BJ (cell line): ENCODE measurements at regions of chr21 and their contacts with region 1.

Region 1: GRCh38 chr21:25970254-25970930 is 200.2 kb downstream of the APP start:
- DNase-seq: no peak
- H3K4me3 ChIP-seq: no peak overlapping the region
- H3K27me3 ChIP-seq: no peaks in the 10 kb centered on the region
- CTCF ChIP-seq: no peak

Region 2: GRCh38 chr21:25764065-25764464 is 206.3 kb before region 1 on chr21:
- CTCF ChIA-PET with region 1: no interaction called
- POLR2A ChIA-PET with region 1: no interaction called
- DNase-seq: no peak
- H3K4me3 ChIP-seq: no peak overlapping the region
- H3K27me3 ChIP-seq: no peaks in the 10 kb centered on the region
- CTCF ChIP-seq: no peak

Region 3: DNA sequence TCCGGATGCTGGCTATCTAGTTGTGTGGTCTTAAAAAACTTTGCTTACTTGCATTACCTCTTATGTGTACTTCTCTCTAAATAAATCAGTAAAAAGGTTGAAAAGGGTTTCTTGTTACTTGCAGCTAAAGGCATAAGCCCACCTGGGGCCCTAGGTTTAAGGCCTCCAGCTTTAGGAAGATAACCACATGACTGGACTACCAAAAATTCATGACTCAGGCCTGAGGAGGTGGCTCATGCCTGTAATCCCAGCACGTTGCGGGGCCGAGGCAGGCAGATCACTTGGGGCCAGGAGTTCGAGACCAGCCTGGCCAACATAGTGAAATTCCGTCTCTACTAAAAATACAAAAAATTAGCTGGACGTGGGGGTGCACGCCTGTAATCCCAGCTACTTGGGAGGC is 57.3 kb after region 1 on chr21:
- CTCF ChIA-PET with region 1: no interaction called
- POLR2A ChIA-PET with region 1: interaction called, 12 read pairs
- DNase-seq: no peak
- H3K4me3 ChIP-seq: no peak overlapping the region
- H3K27me3 ChIP-seq: no peaks in the 10 kb centered on the region
- CTCF ChIP-seq: no peak